ENCODE measurements at regions of chr2 and their contacts with region 1.

Region 1: DNA sequence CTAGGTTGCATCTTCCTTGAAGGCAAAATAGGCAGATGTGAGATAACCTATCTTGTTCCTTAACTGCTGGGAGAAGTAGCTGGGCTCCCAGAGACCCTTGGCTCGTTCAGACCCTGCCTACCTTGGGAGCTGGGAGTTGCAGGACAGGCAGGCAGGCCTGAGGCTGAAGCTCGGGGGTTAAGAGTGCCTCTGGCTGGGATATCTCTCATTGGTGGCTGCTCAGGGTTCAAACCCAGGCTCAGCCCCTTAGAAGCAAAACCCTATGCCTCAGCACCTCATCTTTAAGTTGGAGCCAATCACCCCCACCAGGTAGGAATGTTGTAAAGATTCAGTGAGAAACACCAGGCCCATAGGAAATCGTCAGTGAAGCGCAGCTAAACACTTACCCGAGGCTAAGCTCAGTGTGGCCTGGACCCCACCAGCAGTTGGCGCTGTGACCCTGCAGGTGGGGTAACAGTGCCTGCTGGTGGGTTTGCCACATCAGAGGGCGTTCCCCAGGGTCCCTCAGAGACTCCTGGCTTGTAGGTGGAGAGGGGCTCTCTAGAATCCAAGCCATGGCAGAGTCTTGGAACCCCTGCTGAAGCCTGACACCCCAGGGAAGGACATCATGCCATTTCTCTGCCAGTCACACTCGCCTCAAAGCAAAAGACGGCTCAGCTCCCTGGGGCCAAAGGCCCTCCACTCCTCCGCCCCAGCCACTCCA is 54.6 kb upstream of the GPR17 start:
- DNase-seq: peak; percentile 75
- ATAC-seq: peak; percentile 94
- H3K4me3 Mint-ChIP-seq: no peak overlapping the region
- H3K27ac Mint-ChIP-seq: no peak overlapping the region
- H3K4me1 Mint-ChIP-seq: peaks cover 3% of the 10 kb centered on the region
- H3K27me3 Mint-ChIP-seq: peaks cover 2% of the 10 kb centered on the region

Region 2: GRCh38 chr2:127576433-127577207 is 14.8 kb before region 1 on chr2:
- CTCF ChIA-PET with region 1: interaction called, 22 read pairs
- POLR2A ChIA-PET with region 1: no interaction called
- DNase-seq: no peak
- ATAC-seq: no peak
- H3K4me3 Mint-ChIP-seq: no peak overlapping the region
- H3K27ac Mint-ChIP-seq: peak overlapping the region; percentile 66
- H3K4me1 Mint-ChIP-seq: peaks cover 32% of the 10 kb centered on the region
- H3K27me3 Mint-ChIP-seq: peaks cover 7% of the 10 kb centered on the region

Region 3: DNA sequence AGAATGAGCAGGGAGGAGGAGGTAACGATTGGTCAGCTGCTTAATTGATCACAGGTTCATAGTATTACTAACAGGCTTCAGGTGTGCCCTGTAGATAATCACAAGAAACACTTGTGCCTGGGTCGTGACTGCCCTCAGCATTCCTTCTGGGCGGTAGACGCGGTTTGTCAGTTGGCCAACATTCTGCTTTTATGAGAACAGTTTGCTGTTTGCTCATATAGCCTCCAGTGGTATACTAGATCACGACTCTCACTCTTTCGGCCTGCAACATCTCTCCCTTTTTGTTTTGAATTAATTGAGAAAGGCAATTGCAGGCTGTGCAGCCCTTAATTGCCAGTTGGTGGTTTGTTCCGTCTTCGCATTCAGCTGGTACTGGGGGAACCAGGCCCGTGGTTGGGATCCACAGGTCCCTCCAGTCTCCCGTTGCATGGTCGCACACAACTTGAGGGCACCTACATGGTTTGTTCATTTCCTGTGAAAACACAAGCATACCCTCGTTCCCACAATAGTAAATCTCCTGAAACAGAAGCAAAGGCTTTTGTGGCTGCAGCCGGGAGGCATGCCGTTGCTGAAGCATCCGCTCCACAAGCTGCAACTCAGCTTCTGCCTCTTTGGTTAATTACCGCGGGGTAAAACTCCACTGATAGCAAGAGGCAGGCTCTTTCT is 24.3 kb after region 1 on chr2:
- CTCF ChIA-PET with region 1: interaction called, 16 read pairs
- POLR2A ChIA-PET with region 1: no interaction called
- DNase-seq: peak; percentile 39
- ATAC-seq: peak; percentile 55
- H3K4me3 Mint-ChIP-seq: peak overlapping the region; percentile 20
- H3K27ac Mint-ChIP-seq: peak overlapping the region; percentile 58
- H3K4me1 Mint-ChIP-seq: peaks cover 18% of the 10 kb centered on the region
- H3K27me3 Mint-ChIP-seq: peaks cover 35% of the 10 kb centered on the region

Region 4: DNA sequence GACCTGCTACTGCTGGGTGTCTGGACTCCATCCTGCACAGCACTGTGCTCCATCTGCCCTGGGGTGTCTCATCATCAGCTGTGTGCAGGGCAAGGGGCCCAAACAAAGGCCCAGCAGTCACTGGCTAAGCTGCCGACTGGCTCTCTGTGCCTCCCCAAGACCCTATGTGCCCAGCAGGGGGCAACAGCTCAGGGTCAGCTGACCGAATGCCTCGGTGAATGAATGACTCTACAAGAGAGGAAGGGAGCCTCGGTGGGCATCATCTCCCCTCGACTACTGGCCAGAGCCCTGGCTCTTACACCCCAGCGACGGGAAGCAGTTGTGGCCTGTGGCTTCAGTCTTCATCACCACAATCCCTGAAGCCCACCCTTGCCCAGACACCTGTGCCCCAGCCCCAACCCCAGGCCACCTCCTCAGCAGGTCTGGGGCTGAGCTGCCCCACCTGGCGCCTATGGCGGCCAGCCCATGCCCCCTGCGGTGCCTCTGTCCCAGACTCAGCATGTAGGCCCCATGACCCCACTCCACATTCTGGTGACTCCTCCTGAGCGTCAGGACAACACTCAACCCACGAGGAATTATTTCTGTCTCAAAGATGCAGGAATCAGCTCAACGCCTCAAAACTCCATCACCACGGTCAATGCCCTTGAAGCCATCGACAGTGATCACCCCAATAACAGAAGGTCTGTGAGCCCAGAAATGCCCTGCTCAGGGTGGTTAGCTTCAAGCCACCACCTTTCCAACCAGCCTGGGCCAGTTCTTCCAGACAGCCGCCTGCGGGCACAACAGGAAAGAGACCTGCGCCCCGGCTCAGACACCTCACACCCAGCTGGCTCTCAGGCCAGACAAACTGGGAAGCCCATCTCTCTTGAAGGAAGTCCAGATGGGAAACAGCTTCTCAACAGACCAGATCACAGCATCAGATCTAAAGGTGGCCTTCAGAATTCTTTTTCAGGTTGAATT is 53.0 kb after region 1 on chr2:
- CTCF ChIA-PET with region 1: interaction called, 174 read pairs
- POLR2A ChIA-PET with region 1: interaction called, 5 read pairs
- DNase-seq: no peak
- ATAC-seq: no peak
- H3K4me3 Mint-ChIP-seq: no peak overlapping the region
- H3K27ac Mint-ChIP-seq: no peak overlapping the region
- H3K4me1 Mint-ChIP-seq: peaks cover 33% of the 10 kb centered on the region
- H3K27me3 Mint-ChIP-seq: no peaks in the 10 kb centered on the region

Region 5: GRCh38 chr2:127675331-127676261 is 84.2 kb after region 1 on chr2 and contains the start of gene LIMS2:
- CTCF ChIA-PET with region 1: interaction called, 13 read pairs
- POLR2A ChIA-PET with region 1: no interaction called
- DNase-seq: no peak
- ATAC-seq: no peak
- H3K4me3 Mint-ChIP-seq: peak within 1 kb of the TSS; percentile 50
- H3K27ac Mint-ChIP-seq: no peak within 1 kb of the TSS
- H3K4me1 Mint-ChIP-seq: peaks cover 4% of the 10 kb centered on the region
- H3K27me3 Mint-ChIP-seq: peaks cover 61% of the 10 kb centered on the region
- total RNA-seq, gene LIMS2: 35.3 to 38.3 TPM

Region 6: DNA sequence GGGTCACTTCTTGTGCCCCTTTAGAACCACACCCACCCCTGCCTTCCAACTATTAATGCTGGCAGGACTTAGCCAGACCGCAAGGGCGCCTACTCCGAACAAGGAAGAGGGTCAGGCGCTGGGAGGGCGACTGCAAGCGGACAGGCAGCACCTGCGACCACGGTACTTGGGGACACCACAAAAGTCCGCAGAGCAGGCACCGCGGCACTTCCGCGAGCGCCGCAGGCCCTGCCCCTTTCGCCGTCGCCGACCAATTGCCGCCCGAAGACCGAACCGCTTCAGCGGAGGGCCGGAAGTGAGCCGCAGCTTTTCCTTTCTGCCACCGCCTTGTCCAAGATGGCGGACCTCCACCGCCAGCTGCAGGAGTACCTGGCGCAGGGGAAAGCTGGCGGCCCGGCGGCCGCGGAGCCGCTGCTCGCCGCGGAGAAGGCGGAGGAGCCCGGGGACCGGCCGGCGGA is 109.8 kb after region 1 on chr2 and contains the start of gene SFT2D3:
- CTCF ChIA-PET with region 1: interaction called, 36 read pairs
- POLR2A ChIA-PET with region 1: interaction called, 4 read pairs
- DNase-seq: peak; percentile 93
- ATAC-seq: peak; percentile 83
- H3K4me3 Mint-ChIP-seq: peak within 1 kb of the TSS; percentile 84
- H3K27ac Mint-ChIP-seq: peak within 1 kb of the TSS; percentile 95
- H3K4me1 Mint-ChIP-seq: peaks cover 41% of the 10 kb centered on the region
- H3K27me3 Mint-ChIP-seq: no peaks in the 10 kb centered on the region
- total RNA-seq, gene SFT2D3: 4.8 to 5.5 TPM

Measured in activated CD8-positive, alpha-beta T cell treated with anti-CD3 and anti-CD28 coated beads, Interleukin-2, amount 10 ng/mL, durations not matched to agents 7 days and 5 days (primary cell).